ENCODE measurements at regions of chr9 and their contacts with region 1.

Region 1: DNA sequence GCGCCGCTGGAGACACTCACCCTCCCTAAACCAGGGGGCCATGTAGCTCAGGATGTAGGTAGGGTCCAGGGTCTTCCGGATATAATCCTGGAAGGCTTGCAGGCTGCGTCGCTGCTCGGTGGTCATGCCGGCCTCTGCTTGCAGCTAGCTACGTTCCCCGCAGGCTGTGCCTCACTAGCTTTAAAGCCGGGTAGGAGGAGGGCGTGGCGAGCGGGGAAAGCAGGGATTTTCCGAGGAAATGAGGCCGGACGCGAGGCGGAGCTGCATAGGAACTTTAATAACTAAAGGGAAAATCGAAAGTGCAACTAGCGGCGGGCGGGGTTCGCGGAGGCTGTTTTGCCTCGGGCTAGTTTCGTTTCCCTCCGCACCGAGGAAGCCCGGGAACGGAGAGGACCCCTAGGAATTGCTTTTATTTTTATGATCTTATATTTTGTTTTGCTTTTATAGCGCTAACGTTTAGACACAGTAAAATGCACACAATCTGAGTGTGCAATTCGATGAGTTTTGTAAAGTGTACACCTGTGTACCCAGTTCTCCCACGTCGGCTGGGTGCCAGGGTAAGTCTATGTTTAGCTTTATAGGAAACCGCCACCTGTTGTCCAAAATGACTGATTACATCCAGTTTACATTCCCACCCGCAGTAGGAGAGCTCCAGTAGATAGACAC is at the start of gene RIGI:
- DNase-seq: peak; percentile 83 to 91
- H3K4me3 ChIP-seq: peak within 1 kb of the TSS; percentile 52
- H3K4me3 Mint-ChIP-seq: peak within 1 kb of the TSS; percentile 73
- H3K27ac Mint-ChIP-seq: peak within 1 kb of the TSS; percentile 59
- H3K4me1 ChIP-seq: peaks cover 19% of the 10 kb centered on the region
- H3K4me1 Mint-ChIP-seq: peaks cover 28% of the 10 kb centered on the region
- H3K27me3 ChIP-seq: no peaks in the 10 kb centered on the region
- H3K27me3 Mint-ChIP-seq: no peaks in the 10 kb centered on the region
- CTCF ChIP-seq: peak; percentile 54 to 58
- total RNA-seq, gene RIGI: 7.9 and 8.0 TPM in 2 replicates

Region 2: GRCh38 chr9:31336386-31336785 is 1189.8 kb before region 1 on chr9:
- CTCF ChIA-PET with region 1: no interaction called
- POLR2A ChIA-PET with region 1: no interaction called
- intact Hi-C with region 1: no loop called
- DNase-seq: no peak
- H3K4me3 ChIP-seq: no peak overlapping the region
- H3K4me3 Mint-ChIP-seq: no peak overlapping the region
- H3K27ac Mint-ChIP-seq: no peak overlapping the region
- H3K4me1 ChIP-seq: no peaks in the 10 kb centered on the region
- H3K4me1 Mint-ChIP-seq: no peaks in the 10 kb centered on the region
- H3K27me3 ChIP-seq: no peaks in the 10 kb centered on the region
- H3K27me3 Mint-ChIP-seq: no peaks in the 10 kb centered on the region
- CTCF ChIP-seq: no peak

Region 3: DNA sequence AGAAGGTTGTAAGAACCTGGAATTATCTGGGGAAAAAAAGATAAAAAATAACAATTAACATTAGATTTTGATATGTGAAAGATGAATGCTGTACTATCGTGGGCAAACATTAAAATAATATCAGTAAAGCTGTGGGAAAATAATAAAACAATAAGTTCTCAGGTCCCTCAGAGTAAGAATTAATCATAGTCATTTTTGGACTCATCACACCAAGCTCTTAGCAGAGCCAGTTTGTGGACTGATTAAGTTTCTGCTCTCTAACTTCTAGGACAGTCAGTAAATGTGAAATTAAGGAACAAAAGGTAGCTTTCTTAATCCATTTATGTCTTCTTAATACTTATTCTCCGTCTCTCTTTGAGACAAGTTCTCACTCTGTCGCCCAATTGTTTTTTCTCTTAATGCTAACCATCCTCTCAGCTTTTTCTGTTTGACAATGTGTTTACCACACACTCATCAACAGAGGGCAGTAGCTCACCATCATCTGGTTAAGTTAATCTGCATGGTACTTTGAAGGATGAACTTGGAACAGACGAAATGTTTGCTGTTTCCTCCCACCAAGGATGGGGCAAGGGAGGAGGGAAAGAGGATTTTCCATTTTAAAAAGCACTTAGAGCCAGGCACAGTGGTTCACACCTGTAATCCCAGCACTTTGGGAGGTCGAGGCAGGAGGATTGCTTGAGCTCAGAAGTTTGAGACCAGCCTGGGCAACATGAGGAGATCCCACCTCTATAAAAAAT is 147.0 kb before region 1 on chr9:
- CTCF ChIA-PET with region 1: interaction called, 115 read pairs
- POLR2A ChIA-PET with region 1: interaction called, 9 read pairs
- intact Hi-C with region 1: loop called (anchors 1 kb)
- DNase-seq: peak; percentile 50 to 70
- H3K4me3 ChIP-seq: no peak overlapping the region
- H3K4me3 Mint-ChIP-seq: no peak overlapping the region
- H3K27ac Mint-ChIP-seq: no peak overlapping the region
- H3K4me1 ChIP-seq: 0 out of 2 replicates have a peak, but pooled peaks cover 4% of the 10 kb centered on the region
- H3K4me1 Mint-ChIP-seq: peaks cover 24% of the 10 kb centered on the region
- H3K27me3 ChIP-seq: no peaks in the 10 kb centered on the region
- H3K27me3 Mint-ChIP-seq: peaks cover 8% of the 10 kb centered on the region
- CTCF ChIP-seq: peak; percentile 54 to 70

Region 4: DNA sequence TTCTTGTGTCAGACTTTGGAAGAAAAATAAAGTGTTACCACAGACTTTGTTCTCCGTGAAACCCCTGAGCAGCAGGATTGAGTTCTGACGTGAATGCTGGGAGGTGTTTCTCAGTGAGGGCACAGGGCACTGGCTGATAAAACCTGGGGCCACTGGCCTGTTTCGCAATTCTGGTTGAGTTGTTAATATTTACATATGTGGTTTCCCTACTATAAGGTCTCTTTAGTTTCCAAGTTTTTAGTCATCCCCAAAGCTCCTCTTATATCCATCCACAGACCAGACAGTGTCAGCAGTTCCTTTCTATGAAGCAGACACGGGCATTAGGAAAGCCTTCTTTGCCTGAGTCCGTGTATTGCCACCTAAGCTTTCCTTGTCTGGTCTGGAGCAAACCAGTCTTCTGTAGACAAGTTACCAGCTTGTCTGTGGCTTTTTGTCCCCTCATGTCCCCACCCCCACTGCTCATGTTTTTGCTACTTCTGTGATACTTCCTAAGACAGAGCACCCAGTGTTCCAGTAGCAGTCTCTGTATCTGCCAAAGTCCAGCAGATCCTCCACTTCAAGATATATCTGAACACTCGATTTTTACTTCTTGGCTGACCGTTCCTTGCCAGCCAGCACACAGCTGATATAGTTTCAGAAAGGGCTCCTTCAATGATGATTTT is 99.8 kb before region 1 on chr9:
- CTCF ChIA-PET with region 1: interaction called, 7 read pairs
- POLR2A ChIA-PET with region 1: no interaction called
- intact Hi-C with region 1: loop called (anchors 1 kb)
- DNase-seq: peak; percentile 56 to 76
- H3K4me3 ChIP-seq: no peak overlapping the region
- H3K4me3 Mint-ChIP-seq: no peak overlapping the region
- H3K27ac Mint-ChIP-seq: peak overlapping the region; percentile 59
- H3K4me1 ChIP-seq: peaks cover 24% of the 10 kb centered on the region
- H3K4me1 Mint-ChIP-seq: no peaks in the 10 kb centered on the region
- H3K27me3 ChIP-seq: no peaks in the 10 kb centered on the region
- H3K27me3 Mint-ChIP-seq: no peaks in the 10 kb centered on the region
- CTCF ChIP-seq: no peak

Region 5: DNA sequence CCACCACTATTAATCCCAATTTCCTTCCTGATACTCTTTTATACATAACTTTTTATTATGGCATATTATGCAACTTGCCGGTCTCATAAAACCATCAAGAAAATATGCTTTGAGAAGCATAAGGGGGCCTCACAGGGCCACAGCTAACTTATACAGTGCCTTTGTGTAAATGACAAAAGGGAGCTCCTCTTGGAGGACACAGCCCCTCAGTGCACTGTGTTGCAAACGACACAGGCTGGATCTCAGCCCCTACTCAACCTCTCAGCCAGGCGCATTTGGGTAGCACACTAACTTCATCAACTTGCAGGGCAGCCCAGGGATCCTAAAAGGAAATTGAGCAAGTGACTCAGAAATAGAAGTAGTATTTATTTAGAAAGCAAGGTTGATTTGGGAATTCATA is 35.6 kb before region 1 on chr9:
- CTCF ChIA-PET with region 1: interaction called, 3 read pairs
- POLR2A ChIA-PET with region 1: no interaction called
- intact Hi-C with region 1: loop called (anchors 5 kb)
- DNase-seq: no peak
- H3K4me3 ChIP-seq: no peak overlapping the region
- H3K4me3 Mint-ChIP-seq: no peak overlapping the region
- H3K27ac Mint-ChIP-seq: no peak overlapping the region
- H3K4me1 ChIP-seq: peaks cover 10% of the 10 kb centered on the region
- H3K4me1 Mint-ChIP-seq: no peaks in the 10 kb centered on the region
- H3K27me3 ChIP-seq: no peaks in the 10 kb centered on the region
- H3K27me3 Mint-ChIP-seq: no peaks in the 10 kb centered on the region
- CTCF ChIP-seq: no peak

Region 6: DNA sequence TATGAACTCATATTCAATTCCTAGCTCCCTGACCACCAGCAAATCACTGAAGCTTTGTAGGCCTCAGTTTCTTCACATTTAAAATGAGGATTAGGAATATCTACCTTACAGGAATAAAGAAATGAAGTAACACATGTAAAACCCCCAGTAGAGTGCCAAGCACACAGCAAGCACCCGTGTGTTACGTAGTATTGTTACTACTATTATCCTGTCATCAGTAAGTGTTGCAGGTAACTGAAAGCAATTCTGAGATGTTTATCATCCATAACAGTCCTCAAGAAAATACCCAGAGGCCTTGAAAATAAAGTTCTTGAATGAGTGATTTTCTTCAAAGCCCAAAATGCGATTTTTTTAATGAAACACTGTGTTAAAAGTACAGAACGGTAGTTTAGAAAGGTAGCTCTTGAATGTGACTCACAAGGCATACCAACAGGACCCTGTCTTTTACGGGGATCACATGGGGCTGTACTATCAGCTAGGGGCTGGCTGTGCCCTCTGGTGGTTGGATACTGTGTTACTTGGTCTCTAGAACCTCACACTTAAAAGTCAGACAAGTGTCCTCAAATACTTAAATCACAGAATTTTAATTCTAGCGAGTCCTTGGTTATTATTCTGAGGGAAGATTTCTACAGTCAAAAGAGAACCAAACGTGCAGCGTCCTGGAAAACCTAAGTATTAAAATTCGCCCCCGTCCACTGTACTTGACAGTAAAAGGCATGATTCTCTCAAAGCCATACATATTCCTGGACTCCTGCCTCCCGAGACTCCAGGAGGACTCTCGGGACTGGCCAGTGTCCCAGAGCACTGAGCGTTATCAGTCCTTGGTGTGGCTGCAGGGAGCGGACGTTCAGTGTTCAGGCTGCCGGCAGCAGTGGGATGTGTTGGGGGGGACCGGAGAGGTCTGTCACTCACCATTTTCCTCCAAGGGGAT is 46.1 kb after region 1 on chr9:
- CTCF ChIA-PET with region 1: interaction called, 18 read pairs
- POLR2A ChIA-PET with region 1: no interaction called
- intact Hi-C with region 1: loop called (anchors 1 kb)
- DNase-seq: peak; percentile 74 to 78
- H3K4me3 ChIP-seq: peak overlapping the region; percentile 86
- H3K4me3 Mint-ChIP-seq: peak overlapping the region; percentile 98
- H3K27ac Mint-ChIP-seq: peak overlapping the region; percentile 100
- H3K4me1 ChIP-seq: peaks cover 5% of the 10 kb centered on the region; the same call in 1 of the 2 replicates
- H3K4me1 Mint-ChIP-seq: no peaks in the 10 kb centered on the region
- H3K27me3 ChIP-seq: no peaks in the 10 kb centered on the region
- H3K27me3 Mint-ChIP-seq: peaks cover 2% of the 10 kb centered on the region
- CTCF ChIP-seq: peak; percentile 73 to 76